ENCODE measurements at regions of chr10 and their contacts with region 1.

Region 1: GRCh38 chr10:2861632-2862210 is 205.6 kb upstream of the PFKP start:
- DNase-seq: no peak
- ATAC-seq: no peak
- H3K4me3 ChIP-seq: no peak overlapping the region
- H3K27ac ChIP-seq: no peak overlapping the region
- H3K4me1 ChIP-seq: no peaks in the 10 kb centered on the region
- H3K27me3 ChIP-seq: peaks cover 1 to 10% of the 10 kb centered on the region in 2 experiments; a peak in 2 of 5 replicates
- CTCF ChIP-seq: no peak
- EP300 ChIP-seq: no peak
- POLR2A ChIP-seq: no peak
- RAD21 ChIP-seq: no peak

Region 2: GRCh38 chr10:4283846-4284610 is 1422.3 kb after region 1 on chr10:
- CTCF ChIA-PET with region 1: no interaction called
- POLR2A ChIA-PET with region 1: no interaction called
- in situ Hi-C with region 1: no loop called
- intact Hi-C with region 1: loop called (anchors 5 kb)
- DNase-seq: no peak
- ATAC-seq: no peak
- H3K4me3 ChIP-seq: no peak overlapping the region
- H3K27ac ChIP-seq: no peak overlapping the region
- H3K4me1 ChIP-seq: no peaks in the 10 kb centered on the region
- H3K27me3 ChIP-seq: 0 out of 5 replicates have a peak, but pooled peaks cover 0 to 7% of the 10 kb centered on the region in 2 experiments
- CTCF ChIP-seq: no peak
- EP300 ChIP-seq: no peak
- POLR2A ChIP-seq: no peak
- RAD21 ChIP-seq: no peak

Measured in HepG2 (cell line).